CD14-positive monocyte (primary cell): ENCODE measurements at regions of chr9 and their contacts with region 1.

Region 1: DNA sequence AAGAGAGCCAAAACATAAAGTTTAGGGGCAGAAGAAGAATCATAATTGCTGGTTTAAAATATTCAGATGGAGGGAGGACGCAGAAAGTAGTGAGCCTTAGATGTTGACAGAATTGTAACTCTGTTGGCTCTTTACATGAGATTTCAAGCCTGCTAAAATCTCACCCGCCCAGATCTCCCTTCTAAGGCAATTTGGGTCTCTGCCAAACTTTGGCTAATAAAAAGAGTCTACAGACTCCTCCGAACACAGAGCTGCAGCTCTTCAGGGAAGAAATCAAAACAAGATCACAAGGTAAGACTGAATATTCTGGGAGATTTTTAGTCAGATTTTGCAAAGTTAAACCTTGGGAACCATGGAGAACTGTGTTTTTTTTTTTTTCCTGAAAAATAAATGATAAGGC is at the start of gene IL33:
- DNase-seq: no peak
- H3K4me3 ChIP-seq: no peak within 1 kb of the TSS
- H3K4me3 Mint-ChIP-seq: no peak within 1 kb of the TSS
- H3K27ac ChIP-seq: no peak within 1 kb of the TSS
- H3K27ac Mint-ChIP-seq: peak within 1 kb of the TSS in 1 of 7 donors; percentile 47
- H3K4me1 ChIP-seq: no peaks in the 10 kb centered on the region
- H3K4me1 Mint-ChIP-seq: no peaks in the 10 kb centered on the region
- H3K27me3 ChIP-seq: peaks cover 0 to 2% of the 10 kb centered on the region in 2 donors
- H3K27me3 Mint-ChIP-seq: peaks cover 4 to 7% (median 7%) of the 10 kb centered on the region in 3 donors
- CTCF ChIP-seq: no peak
- polyA plus RNA-seq, gene IL33: not detected

Region 2: GRCh38 chr9:5288591-5288990 is 927.0 kb before region 1 on chr9:
- intact Hi-C with region 1: loop called in 1 of 2 experiments (anchors 10 kb)
- DNase-seq: no peak
- H3K4me3 ChIP-seq: no peak overlapping the region
- H3K4me3 Mint-ChIP-seq: no peak overlapping the region
- H3K27ac ChIP-seq: no peak overlapping the region
- H3K27ac Mint-ChIP-seq: no peak overlapping the region
- H3K4me1 ChIP-seq: no peaks in the 10 kb centered on the region
- H3K4me1 Mint-ChIP-seq: no peaks in the 10 kb centered on the region
- H3K27me3 ChIP-seq: no peaks in the 10 kb centered on the region
- H3K27me3 Mint-ChIP-seq: peaks cover 1 to 2% (median 2%) of the 10 kb centered on the region in 3 donors
- CTCF ChIP-seq: no peak